SK-N-SH (cell line): ENCODE measurements at regions of chr11 and their contacts with region 1.

Region 1: DNA sequence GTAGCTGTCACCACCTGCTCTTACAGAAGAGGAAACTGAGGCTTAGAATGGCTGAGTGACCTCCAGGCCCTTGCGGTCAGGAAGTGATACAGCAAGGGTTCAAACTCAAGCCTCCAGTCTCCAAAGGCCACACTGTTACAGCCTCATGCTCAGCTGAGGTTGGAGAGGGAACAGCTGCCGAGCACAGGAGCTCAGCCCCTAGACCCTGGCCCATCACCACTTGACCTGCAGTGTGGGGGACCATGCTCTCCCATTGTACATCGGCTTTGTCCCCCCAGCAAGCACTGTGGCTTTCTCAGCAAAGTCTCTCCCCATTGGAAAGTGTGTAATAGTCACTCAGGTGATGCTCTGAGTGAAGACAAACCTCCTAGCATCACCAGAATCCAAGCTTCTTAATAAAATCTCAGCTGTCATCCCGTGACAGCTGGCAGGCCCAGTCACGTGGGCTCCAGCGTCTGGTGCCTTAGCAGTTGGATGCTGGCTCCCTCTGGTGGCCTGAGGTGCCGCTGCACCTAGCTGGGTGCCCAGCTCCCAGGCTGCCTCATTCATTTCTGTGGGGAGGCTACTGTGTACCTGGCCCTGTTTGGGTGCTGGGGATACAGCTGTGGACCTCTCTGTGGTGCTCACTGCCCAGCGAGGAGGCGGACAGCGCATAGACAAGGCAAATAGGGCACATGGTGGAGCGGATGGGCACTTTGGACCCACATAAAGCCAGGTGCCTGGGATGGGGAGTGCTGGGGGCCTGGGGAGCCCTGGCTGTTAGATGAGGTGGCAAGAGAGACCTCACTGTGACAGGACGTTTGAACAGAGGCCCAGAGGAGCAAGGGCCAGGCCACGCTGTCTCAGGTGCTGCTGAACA is 19.1 kb upstream of the MYRF start:
- DNase-seq: peak; percentile 95
- H3K4me3 ChIP-seq: no peak overlapping the region; a peak in 1 of 4 replicates
- H3K27ac ChIP-seq: peak overlapping the region in 1 of 2 experiments; percentile 5; a peak in 1 of 4 replicates
- H3K4me1 ChIP-seq: peaks cover 0 to 5% of the 10 kb centered on the region in 2 experiments; a peak in 1 of 4 replicates
- H3K27me3 ChIP-seq: no peaks in the 10 kb centered on the region
- CTCF ChIP-seq: peak; percentile 96
- EP300 ChIP-seq: no peak
- RAD21 ChIP-seq: peak; percentile 97

Region 2: GRCh38 chr11:61477727-61478148 is 255.6 kb before region 1 on chr11:
- CTCF ChIA-PET with region 1: interaction called, 19 read pairs
- POLR2A ChIA-PET with region 1: no interaction called
- DNase-seq: peak; percentile 89
- H3K4me3 ChIP-seq: no peak overlapping the region; a peak in 1 of 4 replicates
- H3K27ac ChIP-seq: no peak overlapping the region
- H3K4me1 ChIP-seq: peaks cover 0 to 12% of the 10 kb centered on the region in 2 experiments; a peak in 1 of 4 replicates
- H3K27me3 ChIP-seq: no peaks in the 10 kb centered on the region
- CTCF ChIP-seq: peak; percentile 92
- EP300 ChIP-seq: no peak
- RAD21 ChIP-seq: peak; percentile 88

Region 3: DNA sequence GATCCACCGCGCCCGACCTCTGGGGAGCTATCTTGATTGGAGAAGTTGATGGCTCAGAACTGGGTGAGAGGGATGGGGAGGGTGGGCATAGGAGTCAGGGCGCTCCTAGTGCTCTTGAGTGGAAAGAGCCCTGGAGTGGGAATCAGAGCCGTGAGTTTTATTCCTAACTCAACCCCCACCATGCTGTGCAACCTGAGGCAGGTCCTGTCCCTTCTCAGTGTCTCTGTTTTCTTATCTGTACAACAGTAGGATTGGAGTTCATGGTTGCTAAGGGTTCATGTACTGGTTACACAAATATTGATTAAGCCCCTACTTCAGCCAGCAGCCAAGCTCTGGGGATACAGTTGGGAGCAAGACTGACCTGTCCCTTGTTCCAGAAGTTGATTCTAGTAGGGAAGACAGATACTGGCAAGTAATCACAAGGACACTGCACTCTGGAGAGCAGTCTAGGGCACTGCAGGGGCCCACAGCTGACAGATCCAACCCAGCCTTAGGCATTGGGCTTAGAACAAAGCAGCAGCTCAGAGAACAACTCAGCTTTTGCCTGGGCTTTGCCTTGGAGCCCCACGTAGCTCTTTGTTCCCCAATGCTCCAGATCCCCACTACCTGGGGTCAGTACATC is 65.6 kb before region 1 on chr11:
- CTCF ChIA-PET with region 1: interaction called, 15 read pairs
- POLR2A ChIA-PET with region 1: no interaction called
- DNase-seq: no peak
- H3K4me3 ChIP-seq: no peak overlapping the region
- H3K27ac ChIP-seq: no peak overlapping the region
- H3K4me1 ChIP-seq: no peaks in the 10 kb centered on the region
- H3K27me3 ChIP-seq: peaks cover 9% of the 10 kb centered on the region
- CTCF ChIP-seq: no peak
- EP300 ChIP-seq: no peak
- RAD21 ChIP-seq: no peak

Region 4: DNA sequence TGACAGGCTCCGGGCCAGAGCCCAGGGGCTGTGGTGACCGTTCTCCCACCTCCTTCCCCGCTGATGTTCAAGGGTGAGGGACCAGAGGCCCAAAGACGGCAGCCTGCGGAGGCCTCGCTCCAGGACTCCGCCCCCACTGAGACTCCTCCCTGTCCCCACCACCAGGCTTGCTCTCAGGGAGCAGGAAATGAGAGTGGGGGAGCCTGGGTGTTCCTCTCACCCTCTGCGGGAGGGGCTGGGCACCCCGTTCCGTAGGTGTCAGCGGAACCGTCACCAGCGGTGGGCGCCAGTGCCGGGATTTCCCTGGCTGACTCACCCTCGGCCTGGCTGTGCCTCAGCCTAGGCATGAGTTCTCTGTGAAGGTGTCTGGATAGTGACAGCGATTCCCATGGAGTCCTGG is 37.4 kb before region 1 on chr11:
- CTCF ChIA-PET with region 1: interaction called, 12 read pairs
- POLR2A ChIA-PET with region 1: no interaction called
- DNase-seq: peak; percentile 56
- H3K4me3 ChIP-seq: no peak overlapping the region
- H3K27ac ChIP-seq: peak overlapping the region in 1 of 2 experiments; percentile 32; a peak in 3 of 4 replicates
- H3K4me1 ChIP-seq: peaks cover 20 to 58% of the 10 kb centered on the region in 2 experiments; a peak in 3 of 4 replicates
- H3K27me3 ChIP-seq: no peaks in the 10 kb centered on the region
- CTCF ChIP-seq: peak; percentile 28
- EP300 ChIP-seq: no peak
- RAD21 ChIP-seq: no peak

Region 5: DNA sequence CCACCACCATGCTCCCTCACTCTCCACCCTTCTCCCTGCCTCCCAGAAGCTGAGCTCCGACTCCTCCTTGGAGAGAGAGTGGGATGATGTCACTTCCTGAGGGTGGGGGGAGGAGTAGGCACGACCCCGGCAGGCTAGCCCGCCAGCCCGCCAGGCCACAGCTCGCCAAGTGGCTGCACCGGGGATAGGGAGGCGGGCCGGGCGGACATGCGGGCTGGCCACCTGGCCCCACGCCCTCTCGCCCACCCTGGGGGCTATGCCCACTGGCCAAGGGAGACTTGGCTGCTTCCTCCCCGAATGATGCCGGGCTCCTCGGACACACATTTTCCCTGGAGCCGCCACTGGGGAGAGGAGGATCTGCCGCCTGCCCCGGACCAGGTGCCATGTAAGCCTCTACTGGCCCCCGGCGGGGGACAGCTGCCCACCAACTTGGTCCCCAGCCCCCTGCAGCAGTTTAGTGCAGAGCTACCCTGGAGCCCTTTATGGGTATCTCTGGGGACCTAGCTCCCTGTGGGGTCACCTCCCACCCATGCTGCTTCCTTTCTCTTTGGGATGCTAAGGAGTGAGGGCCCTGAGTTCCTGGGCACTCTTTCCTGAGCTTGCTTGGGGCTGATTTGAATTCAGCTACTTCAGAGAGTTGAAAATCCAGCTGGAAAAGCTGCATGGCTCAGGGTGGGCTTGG is 14.6 kb before region 1 on chr11:
- CTCF ChIA-PET with region 1: interaction called, 64 read pairs
- POLR2A ChIA-PET with region 1: interaction called, 7 read pairs
- DNase-seq: peak; percentile 96
- H3K4me3 ChIP-seq: peak overlapping the region; percentile 65 to 68
- H3K27ac ChIP-seq: peak overlapping the region in 1 of 2 experiments; percentile 76; a peak in 2 of 4 replicates
- H3K4me1 ChIP-seq: peaks cover 8 to 21% of the 10 kb centered on the region in 2 experiments; a peak in 2 of 4 replicates
- H3K27me3 ChIP-seq: no peaks in the 10 kb centered on the region
- CTCF ChIP-seq: no peak; the same call in 1 of the 2 replicates
- EP300 ChIP-seq: no peak; a peak in 1 of 4 replicates
- RAD21 ChIP-seq: no peak

Region 6: DNA sequence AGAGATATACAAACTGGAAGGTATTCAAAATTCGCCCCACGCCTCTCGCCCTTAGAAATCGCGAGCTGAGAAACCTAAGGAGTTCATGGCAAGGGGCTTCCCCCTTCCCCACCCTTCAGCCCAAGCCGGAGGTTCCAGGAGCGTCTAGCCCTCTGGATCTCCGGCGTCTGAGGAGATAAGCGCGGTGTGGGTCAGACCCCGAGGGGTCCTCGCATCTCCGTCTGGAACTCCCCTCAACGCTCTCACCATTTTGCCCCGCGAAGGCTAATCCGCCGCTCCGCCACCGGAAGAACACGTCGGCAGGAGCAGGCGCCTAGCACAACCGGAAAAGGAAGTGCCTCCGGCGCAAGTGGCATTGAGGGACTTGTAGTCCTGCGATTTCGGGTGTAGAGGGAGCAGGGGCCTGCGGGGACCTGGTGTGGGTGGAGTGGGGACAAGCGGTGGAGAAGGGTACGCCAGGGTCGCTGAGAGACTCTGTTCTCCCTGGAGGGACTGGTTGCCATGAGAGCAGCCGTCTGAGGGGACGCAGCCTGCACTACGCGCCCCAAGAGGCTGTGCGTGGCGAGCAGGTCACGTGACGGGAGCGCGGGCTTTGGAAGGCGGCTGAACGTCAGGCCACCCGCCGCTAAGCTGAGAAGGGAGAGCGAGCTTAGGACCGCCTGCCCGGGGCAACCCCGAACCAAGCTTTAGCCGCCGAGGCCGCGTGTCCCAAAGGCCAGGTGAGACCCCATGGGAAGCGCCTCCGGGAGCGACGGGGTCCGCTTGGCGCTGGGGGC is 59.1 kb after region 1 on chr11 and contains the starts of genes FEN1 and TMEM258:
- CTCF ChIA-PET with region 1: interaction called, 12 read pairs
- POLR2A ChIA-PET with region 1: no interaction called
- DNase-seq: peak; percentile 88
- H3K4me3 ChIP-seq: peak within 1 kb of the TSS; percentile 95 to 98
- H3K27ac ChIP-seq: peak within 1 kb of the TSS; percentile 99 to 100
- H3K4me1 ChIP-seq: peaks cover 5 to 19% of the 10 kb centered on the region in 2 experiments; a peak in 3 of 4 replicates
- H3K27me3 ChIP-seq: no peaks in the 10 kb centered on the region
- CTCF ChIP-seq: no peak
- EP300 ChIP-seq: no peak
- RAD21 ChIP-seq: no peak
- polyA plus RNA-seq, gene FEN1: 35.9 and 39.5 TPM in 2 replicates
- polyA plus RNA-seq, gene TMEM258: 454 and 617 TPM in 2 replicates

Region 7: GRCh38 chr11:62081378-62082291 is 348.3 kb after region 1 on chr11:
- CTCF ChIA-PET with region 1: no interaction called
- POLR2A ChIA-PET with region 1: no interaction called
- DNase-seq: peak; percentile 76
- H3K4me3 ChIP-seq: no peak overlapping the region
- H3K27ac ChIP-seq: no peak overlapping the region
- H3K4me1 ChIP-seq: peaks cover 0 to 5% of the 10 kb centered on the region in 2 experiments; a peak in 1 of 4 replicates
- H3K27me3 ChIP-seq: no peaks in the 10 kb centered on the region
- CTCF ChIP-seq: peak; percentile 94
- EP300 ChIP-seq: no peak
- RAD21 ChIP-seq: peak; percentile 98